ENCODE measurements at regions of chr17 and their contacts with region 1.

Region 1: DNA sequence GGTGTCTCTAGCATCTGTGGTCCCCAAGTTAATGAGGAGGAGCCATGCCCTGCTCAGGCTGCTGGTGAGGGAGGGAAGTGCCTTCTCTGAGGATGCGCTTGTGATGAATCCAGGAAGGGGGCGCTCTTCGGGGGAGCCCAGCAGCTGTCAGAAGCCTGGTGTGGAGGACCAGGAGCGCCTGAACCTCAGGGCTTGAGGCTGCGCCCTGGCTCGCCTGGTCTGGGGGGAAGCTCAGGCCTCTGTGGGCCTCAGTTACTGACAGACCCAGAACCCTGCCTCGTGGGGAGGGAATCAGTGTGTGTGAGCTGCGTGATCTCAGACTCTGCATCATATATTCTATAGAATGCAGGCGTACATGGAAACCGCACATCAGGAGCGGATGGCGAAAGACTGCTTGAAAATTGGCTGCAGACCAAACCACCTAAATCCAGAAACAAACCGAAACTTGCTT is 126.1 kb downstream of the SEC14L1 start:
- DNase-seq: peak in 1 of 35 experiments; percentile 20
- ATAC-seq: peak in 1 of 4 experiments; percentile 36
- H3K4me3 ChIP-seq: no peak overlapping the region
- H3K4me3 Mint-ChIP-seq: no peak overlapping the region
- H3K27ac ChIP-seq: no peak overlapping the region
- H3K27ac Mint-ChIP-seq: no peak overlapping the region
- H3K4me1 ChIP-seq: no peaks in the 10 kb centered on the region
- H3K4me1 Mint-ChIP-seq: no peaks in the 10 kb centered on the region
- H3K27me3 ChIP-seq: peaks cover 0 to 36% of the 10 kb centered on the region in 2 experiments
- H3K27me3 Mint-ChIP-seq: peaks cover 0 to 6% of the 10 kb centered on the region in 2 donors

Region 2: DNA sequence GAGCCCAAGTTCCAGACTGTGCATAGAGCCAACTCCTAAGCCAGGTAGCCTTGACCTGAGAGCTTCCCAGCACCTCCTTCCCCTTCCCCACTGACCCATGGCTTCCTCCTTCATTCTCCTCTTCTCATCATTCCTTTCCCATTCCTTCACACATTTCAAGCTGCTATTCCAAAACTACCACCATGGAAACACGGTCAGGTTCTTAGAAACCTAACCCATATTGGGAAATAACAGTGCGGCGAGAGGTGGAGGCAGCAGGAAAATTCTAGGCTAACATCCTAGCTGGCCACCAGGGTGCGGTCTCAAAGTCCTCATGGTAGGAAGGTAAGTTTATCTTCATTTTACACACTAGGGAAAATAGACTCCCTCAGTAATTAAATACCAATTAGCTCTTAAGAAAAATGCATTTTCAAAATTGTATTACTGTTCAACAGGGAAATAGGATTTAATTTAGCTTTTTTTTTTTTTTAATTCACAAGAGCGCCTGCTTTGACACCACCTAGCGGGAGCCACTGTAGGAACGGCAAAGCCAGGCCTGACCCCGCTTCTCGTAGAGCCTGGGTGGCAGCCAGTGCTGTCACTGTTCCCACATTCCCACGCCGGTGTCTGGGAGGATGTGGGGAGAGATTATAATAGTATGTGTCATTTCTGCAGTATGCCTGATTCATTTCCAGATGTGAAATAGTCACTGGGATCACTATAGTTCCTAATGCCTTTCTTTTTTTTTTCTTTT is 896.5 kb before region 1 on chr17:
- CTCF ChIA-PET with region 1: no interaction called
- POLR2A ChIA-PET with region 1: no interaction called
- DNase-seq: no peak
- ATAC-seq: no peak
- H3K4me3 ChIP-seq: no peak overlapping the region
- H3K4me3 Mint-ChIP-seq: no peak overlapping the region
- H3K27ac ChIP-seq: no peak overlapping the region
- H3K27ac Mint-ChIP-seq: no peak overlapping the region
- H3K4me1 ChIP-seq: no peaks in the 10 kb centered on the region
- H3K4me1 Mint-ChIP-seq: no peaks in the 10 kb centered on the region
- H3K27me3 ChIP-seq: peaks cover 0 to 9% of the 10 kb centered on the region in 2 experiments
- H3K27me3 Mint-ChIP-seq: no peaks in the 10 kb centered on the region

Region 3: DNA sequence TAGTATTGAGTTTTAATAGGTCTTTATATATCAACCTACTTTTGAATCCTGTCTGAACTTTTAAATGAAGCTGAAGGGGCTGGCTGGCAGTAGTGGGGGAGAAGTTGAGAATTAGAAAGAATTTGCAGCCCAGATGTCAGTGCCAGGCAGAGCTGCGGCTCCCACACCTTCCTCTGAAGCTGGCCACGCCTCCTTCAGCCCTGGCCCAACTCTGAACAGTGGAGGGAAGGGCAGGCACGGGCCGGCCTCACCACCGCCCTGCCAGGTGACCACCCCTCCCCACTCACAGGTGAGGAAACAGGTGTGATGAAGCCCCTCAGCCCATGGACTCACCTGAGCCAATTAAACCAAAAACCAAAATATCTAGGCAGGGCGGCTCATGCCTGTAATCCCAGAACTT is 311.7 kb before region 1 on chr17:
- CTCF ChIA-PET with region 1: no interaction called
- POLR2A ChIA-PET with region 1: interaction called in 1 of 2 experiments, 10 read pairs
- DNase-seq: no peak
- ATAC-seq: no peak
- H3K4me3 ChIP-seq: no peak overlapping the region
- H3K4me3 Mint-ChIP-seq: no peak overlapping the region
- H3K27ac ChIP-seq: no peak overlapping the region
- H3K27ac Mint-ChIP-seq: no peak overlapping the region
- H3K4me1 ChIP-seq: no peaks in the 10 kb centered on the region
- H3K4me1 Mint-ChIP-seq: peaks cover 0 to 1% (median 0%) of the 10 kb centered on the region in 3 donors
- H3K27me3 ChIP-seq: peaks cover 0 to 7% of the 10 kb centered on the region in 2 experiments
- H3K27me3 Mint-ChIP-seq: no peaks in the 10 kb centered on the region

Measured in T-cell (primary cell).